Activated B cell treated with CpG ODN at 0.5 μM for 24 hours (primary cell): ENCODE measurements at regions of chr1 and their contacts with region 1.

Region 1: GRCh38 chr1:9689011-9689706 is 37.6 kb downstream of the PIK3CD start:
- DNase-seq: peak; percentile 80
- ATAC-seq: peak; percentile 78
- H3K4me3 Mint-ChIP-seq: peak overlapping the region; percentile 82
- H3K27ac Mint-ChIP-seq: peak overlapping the region; percentile 87
- H3K4me1 Mint-ChIP-seq: peaks cover 68% of the 10 kb centered on the region
- H3K27me3 Mint-ChIP-seq: no peaks in the 10 kb centered on the region
- CTCF ChIP-seq: no peak

Region 2: GRCh38 chr1:9643351-9644256 is 45.6 kb before region 1 on chr1:
- CTCF ChIA-PET with region 1: interaction called, 3 read pairs
- POLR2A ChIA-PET with region 1: interaction called, 14 read pairs
- intact Hi-C with region 1: no loop called
- DNase-seq: no peak
- ATAC-seq: peak; percentile 37
- H3K4me3 Mint-ChIP-seq: peak overlapping the region; percentile 62
- H3K27ac Mint-ChIP-seq: peak overlapping the region; percentile 80
- H3K4me1 Mint-ChIP-seq: peaks cover 65% of the 10 kb centered on the region
- H3K27me3 Mint-ChIP-seq: no peaks in the 10 kb centered on the region
- CTCF ChIP-seq: no peak

Region 3: DNA sequence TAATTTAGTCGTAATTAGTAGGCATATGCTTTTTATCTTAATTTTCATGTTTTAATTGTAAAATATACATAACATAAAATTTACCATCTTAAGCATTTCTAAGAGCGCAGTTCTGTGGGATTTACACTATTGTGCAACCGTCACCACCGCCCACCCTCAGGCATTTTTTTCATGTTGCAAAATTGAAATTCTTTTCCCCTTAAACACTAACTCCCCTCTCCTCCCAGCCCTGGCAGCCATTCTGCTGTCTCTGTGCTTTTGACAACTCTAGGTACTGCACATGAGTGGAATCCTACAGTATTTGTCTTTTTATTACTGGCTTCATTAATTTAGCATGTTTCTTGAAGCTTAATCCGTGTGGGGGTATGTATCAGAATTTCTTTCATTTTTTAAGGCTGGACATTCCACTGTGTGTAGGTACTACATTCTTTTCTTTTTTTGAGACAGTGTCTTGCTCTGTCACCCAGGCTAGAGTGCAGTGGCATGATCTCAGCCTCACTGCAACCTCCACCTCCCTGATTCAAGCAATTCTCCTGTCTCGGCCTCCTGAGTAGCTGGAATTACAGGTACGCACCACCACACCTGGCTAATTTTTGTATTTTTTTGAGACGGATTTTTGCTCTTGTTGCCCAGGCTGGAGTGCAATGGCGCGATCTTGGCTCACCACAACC is 29.7 kb before region 1 on chr1:
- CTCF ChIA-PET with region 1: interaction called, 4 read pairs
- POLR2A ChIA-PET with region 1: interaction called, 126 read pairs
- intact Hi-C with region 1: loop called (anchors 1 kb)
- DNase-seq: no peak
- ATAC-seq: no peak
- H3K4me3 Mint-ChIP-seq: peak overlapping the region; percentile 19
- H3K27ac Mint-ChIP-seq: peak overlapping the region; percentile 69
- H3K4me1 Mint-ChIP-seq: peaks cover 83% of the 10 kb centered on the region
- H3K27me3 Mint-ChIP-seq: no peaks in the 10 kb centered on the region
- CTCF ChIP-seq: no peak

Region 4: DNA sequence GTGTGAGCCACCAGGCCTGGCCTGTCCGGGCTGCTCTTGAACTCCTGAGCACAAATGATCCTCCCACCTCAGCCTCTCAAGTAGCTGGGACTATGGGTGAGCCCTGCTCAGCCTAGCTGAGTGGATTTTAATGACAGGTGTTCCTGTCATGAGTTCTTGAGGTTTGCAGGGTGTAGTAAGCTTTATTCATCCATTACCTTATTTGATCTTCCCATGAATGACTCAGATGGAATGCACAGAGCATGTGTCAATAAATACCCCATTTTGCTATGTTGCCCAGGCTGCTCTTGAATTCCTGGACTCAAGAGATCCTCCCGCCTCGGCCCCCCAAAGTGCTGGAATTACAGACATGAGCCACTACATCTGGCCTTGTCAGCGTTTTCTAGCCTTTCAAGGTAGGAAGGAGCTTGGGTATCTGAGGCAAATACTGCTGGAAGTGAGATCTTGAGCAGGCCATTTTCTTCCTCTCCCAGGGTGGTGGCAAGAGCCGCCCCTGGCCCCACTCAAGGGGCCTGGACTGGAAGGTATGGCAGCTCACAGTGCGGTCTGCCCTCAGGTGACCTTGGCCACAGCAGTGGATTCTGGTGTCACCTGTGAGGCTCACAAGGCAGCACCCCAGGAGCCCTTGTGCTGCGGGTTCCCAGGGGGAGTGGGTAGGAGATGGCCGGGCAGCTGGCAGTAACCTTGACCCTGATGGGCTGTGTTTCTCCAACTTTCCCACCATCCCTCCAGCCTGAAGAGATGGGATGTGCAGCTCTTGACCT is 17.6 kb before region 1 on chr1:
- CTCF ChIA-PET with region 1: no interaction called
- POLR2A ChIA-PET with region 1: interaction called, 4 read pairs
- intact Hi-C with region 1: loop called (anchors 2 kb)
- DNase-seq: no peak
- ATAC-seq: no peak
- H3K4me3 Mint-ChIP-seq: no peak overlapping the region
- H3K27ac Mint-ChIP-seq: peak overlapping the region; percentile 57
- H3K4me1 Mint-ChIP-seq: peaks cover 67% of the 10 kb centered on the region
- H3K27me3 Mint-ChIP-seq: no peaks in the 10 kb centered on the region
- CTCF ChIP-seq: no peak

Region 5: GRCh38 chr1:9717193-9718005 is 28.2 kb after region 1 on chr1:
- CTCF ChIA-PET with region 1: interaction called, 3 read pairs
- POLR2A ChIA-PET with region 1: no interaction called
- intact Hi-C with region 1: loop called (anchors 2 kb)
- DNase-seq: peak; percentile 68
- ATAC-seq: peak; percentile 79
- H3K4me3 Mint-ChIP-seq: peak overlapping the region; percentile 74
- H3K27ac Mint-ChIP-seq: peak overlapping the region; percentile 92
- H3K4me1 Mint-ChIP-seq: peaks cover 50% of the 10 kb centered on the region
- H3K27me3 Mint-ChIP-seq: no peaks in the 10 kb centered on the region
- CTCF ChIP-seq: no peak

Region 6: DNA sequence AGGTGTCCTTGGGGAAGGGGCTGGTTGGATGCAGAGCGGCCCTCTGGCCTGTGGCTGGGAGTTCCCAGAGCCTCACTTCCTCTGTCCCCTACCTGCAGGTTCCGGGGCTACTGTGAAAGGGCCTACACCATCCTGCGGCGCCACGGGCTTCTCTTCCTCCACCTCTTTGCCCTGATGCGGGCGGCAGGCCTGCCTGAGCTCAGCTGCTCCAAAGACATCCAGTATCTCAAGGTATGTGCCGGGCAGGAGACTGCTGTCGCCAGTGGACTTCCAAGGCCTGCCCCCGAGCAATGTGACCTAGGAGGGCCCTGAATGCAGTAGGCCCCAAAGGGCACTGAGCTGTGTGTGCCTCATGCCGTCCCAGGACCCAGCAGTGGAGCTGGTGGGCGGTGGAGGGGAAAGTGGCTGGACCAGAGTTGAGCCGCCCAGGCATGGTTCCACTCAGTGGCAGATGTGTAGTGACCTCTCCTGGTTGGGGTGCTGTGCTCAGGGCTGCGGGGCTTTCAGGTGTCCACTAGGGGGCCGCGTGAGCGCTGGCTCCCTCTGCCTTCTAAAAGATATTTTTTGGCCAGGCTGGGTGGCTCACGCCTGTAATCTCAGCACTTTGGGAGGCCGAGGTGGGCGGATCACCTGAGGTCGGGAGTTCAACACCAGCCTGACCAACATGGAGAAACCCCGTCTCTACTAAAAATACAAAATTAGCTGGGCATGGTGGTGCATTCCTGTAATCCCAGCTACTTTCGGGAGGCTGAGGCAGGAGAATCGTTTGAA is 35.7 kb after region 1 on chr1:
- CTCF ChIA-PET with region 1: interaction called, 3 read pairs
- POLR2A ChIA-PET with region 1: no interaction called
- intact Hi-C with region 1: loop called (anchors 2 kb)
- DNase-seq: peak; percentile 62
- ATAC-seq: peak; percentile 70
- H3K4me3 Mint-ChIP-seq: no peak overlapping the region
- H3K27ac Mint-ChIP-seq: peak overlapping the region; percentile 74
- H3K4me1 Mint-ChIP-seq: peaks cover 21% of the 10 kb centered on the region
- H3K27me3 Mint-ChIP-seq: no peaks in the 10 kb centered on the region
- CTCF ChIP-seq: peak; percentile 62

Region 7: GRCh38 chr1:9823943-9824701 is 135.0 kb after region 1 on chr1 and contains the start of gene CLSTN1:
- CTCF ChIA-PET with region 1: no interaction called
- POLR2A ChIA-PET with region 1: no interaction called
- intact Hi-C with region 1: loop called (anchors 1 kb)
- DNase-seq: peak; percentile 82
- ATAC-seq: peak; percentile 82
- H3K4me3 Mint-ChIP-seq: peak within 1 kb of the TSS; percentile 92
- H3K27ac Mint-ChIP-seq: peak within 1 kb of the TSS; percentile 82
- H3K4me1 Mint-ChIP-seq: peaks cover 55% of the 10 kb centered on the region
- H3K27me3 Mint-ChIP-seq: no peaks in the 10 kb centered on the region
- CTCF ChIP-seq: no peak
- total RNA-seq, gene CLSTN1: 50.7 and 52.2 TPM in 2 replicates